Activated T-helper 1 cell treated with anti-CD3 and anti-CD28 coated beads, Interleukin-12 subunit alpha, Interleukin-12 subunit beta, Interleukin-2, Interleukin-4 antibody, amounts not matched to agents 30 ng/mL and 10 ng/mL and 1 ng/mL, durations not matched to agents 14 hours and 24 hours and 36 hours (primary cell): ENCODE measurements at regions of chr1 and their contacts with region 1.

Region 1: GRCh38 chr1:8913111-8913856 is 32.4 kb upstream of the CA6 start:
- DNase-seq: no peak
- H3K4me3 Mint-ChIP-seq: no peak overlapping the region
- H3K27ac Mint-ChIP-seq: no peak overlapping the region
- H3K4me1 Mint-ChIP-seq: peaks cover 25% of the 10 kb centered on the region
- H3K27me3 Mint-ChIP-seq: no peaks in the 10 kb centered on the region

Region 2: DNA sequence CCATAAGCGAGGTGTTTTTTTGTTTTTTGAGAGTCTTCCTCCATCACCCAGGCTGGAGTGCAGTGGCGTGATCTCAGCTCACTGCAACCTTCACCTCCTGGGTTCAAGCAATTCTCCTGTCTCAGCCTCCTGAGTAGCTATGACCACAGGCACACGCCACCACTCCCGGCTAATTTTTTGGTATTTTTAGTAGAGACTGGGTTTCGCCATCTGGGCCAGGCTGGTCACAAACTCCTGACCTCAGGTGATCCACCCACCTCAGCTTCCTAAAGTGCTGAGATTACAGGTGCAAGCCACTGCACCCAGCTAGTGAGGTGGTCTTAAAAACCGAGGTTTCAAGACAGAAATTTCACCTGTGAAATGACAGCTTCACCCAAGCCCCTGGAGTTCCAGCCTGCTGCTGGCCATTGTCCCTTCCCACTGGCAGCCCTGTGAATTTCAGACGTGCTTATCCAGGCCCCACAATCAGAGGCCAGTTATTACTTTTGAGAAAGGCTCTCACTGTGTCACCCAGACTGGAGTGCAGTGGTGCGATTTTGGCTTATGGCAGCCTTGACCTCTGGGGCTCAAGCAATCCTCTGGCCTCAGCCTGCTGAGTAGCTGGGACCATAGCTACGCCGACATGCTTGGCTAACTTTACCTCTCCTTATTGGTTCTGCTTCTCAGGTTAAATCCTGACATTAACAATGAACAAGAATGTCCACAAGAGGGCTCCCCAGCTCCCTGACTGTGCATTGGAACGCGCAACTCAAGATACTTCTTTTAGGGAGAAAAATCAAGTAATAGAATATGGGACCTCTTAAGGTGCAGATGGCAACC is 54.2 kb before region 1 on chr1:
- intact Hi-C with region 1: no loop called
- DNase-seq: peak; percentile 40
- H3K4me3 Mint-ChIP-seq: peak overlapping the region; percentile 46
- H3K27ac Mint-ChIP-seq: peak overlapping the region; percentile 82
- H3K4me1 Mint-ChIP-seq: peaks cover 42% of the 10 kb centered on the region
- H3K27me3 Mint-ChIP-seq: no peaks in the 10 kb centered on the region

Region 3: GRCh38 chr1:8947127-8947691 is 33.9 kb after region 1 on chr1:
- intact Hi-C with region 1: loop called (anchors 2 kb)
- DNase-seq: no peak
- H3K4me3 Mint-ChIP-seq: peak overlapping the region; percentile 68
- H3K27ac Mint-ChIP-seq: peak overlapping the region; percentile 98
- H3K4me1 Mint-ChIP-seq: peaks cover 73% of the 10 kb centered on the region
- H3K27me3 Mint-ChIP-seq: no peaks in the 10 kb centered on the region

Region 4: DNA sequence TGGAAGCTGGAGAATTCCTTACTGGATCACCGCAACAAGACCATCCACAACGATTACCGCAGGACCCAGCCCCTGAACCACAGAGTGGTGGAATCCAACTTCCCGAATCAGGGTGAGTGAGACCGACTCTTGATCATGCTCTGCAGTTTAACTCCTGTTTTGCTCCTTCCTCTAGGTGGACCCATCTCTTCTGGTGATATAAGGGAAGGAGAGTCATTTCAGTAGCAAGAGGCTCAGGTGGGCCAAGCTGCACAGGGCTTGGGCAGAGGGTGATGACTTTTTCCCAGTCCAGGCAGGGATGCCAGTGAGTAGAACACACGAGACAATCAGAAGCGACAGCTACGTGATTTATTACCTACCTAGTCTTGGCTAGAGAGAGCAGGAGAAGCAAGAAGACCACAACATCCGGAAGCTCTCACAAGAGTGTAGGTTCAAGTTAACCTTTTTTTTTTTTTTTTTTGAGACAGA is 57.6 kb after region 1 on chr1:
- intact Hi-C with region 1: loop called (anchors 1 kb)
- DNase-seq: peak; percentile 53
- H3K4me3 Mint-ChIP-seq: peak overlapping the region; percentile 97
- H3K27ac Mint-ChIP-seq: peak overlapping the region; percentile 98
- H3K4me1 Mint-ChIP-seq: peaks cover 57% of the 10 kb centered on the region
- H3K27me3 Mint-ChIP-seq: no peaks in the 10 kb centered on the region

Region 5: GRCh38 chr1:8987881-8988617 is 74.8 kb after region 1 on chr1:
- intact Hi-C with region 1: loop called (anchors 1 kb)
- DNase-seq: peak; percentile 66
- H3K4me3 Mint-ChIP-seq: peak overlapping the region; percentile 53
- H3K27ac Mint-ChIP-seq: peak overlapping the region; percentile 92
- H3K4me1 Mint-ChIP-seq: peaks cover 68% of the 10 kb centered on the region
- H3K27me3 Mint-ChIP-seq: no peaks in the 10 kb centered on the region

Region 6: DNA sequence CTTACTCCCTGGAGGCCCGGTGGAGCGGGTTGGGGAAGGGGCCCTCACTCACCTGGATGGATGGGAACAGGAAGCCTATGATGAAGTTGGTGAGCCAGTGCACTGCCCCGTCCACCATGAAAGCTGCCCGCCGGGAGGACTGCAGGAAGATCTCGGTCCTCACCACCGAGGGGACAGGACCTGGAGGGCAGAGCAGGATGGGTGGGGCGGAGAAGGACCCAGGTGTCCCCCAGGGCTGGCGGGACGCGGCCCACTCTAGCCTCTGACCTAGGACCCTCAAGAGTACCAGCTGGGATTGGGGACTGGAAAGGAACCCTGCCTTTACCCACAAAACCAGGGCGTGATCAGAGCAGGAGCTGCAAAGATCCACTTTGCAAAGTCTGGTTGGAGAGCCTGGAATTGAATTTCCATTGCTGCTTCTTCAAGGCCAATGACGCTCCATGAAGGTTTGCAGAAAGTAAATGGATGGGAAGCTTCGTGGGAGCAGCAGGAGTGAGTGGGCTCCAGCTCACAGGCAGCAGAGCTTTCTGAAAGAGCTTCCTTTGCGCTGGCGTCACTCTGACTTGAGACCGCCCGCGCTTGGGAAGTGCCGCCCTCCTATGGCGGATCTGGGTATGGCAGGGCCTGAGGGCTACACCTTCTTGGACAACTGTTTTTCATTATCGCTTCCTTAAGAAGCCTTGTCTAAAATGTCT is 91.6 kb after region 1 on chr1:
- intact Hi-C with region 1: loop called (anchors 1 kb)
- DNase-seq: peak; percentile 78
- H3K4me3 Mint-ChIP-seq: no peak overlapping the region
- H3K27ac Mint-ChIP-seq: no peak overlapping the region
- H3K4me1 Mint-ChIP-seq: peaks cover 6% of the 10 kb centered on the region
- H3K27me3 Mint-ChIP-seq: peaks cover 5% of the 10 kb centered on the region

Region 7: DNA sequence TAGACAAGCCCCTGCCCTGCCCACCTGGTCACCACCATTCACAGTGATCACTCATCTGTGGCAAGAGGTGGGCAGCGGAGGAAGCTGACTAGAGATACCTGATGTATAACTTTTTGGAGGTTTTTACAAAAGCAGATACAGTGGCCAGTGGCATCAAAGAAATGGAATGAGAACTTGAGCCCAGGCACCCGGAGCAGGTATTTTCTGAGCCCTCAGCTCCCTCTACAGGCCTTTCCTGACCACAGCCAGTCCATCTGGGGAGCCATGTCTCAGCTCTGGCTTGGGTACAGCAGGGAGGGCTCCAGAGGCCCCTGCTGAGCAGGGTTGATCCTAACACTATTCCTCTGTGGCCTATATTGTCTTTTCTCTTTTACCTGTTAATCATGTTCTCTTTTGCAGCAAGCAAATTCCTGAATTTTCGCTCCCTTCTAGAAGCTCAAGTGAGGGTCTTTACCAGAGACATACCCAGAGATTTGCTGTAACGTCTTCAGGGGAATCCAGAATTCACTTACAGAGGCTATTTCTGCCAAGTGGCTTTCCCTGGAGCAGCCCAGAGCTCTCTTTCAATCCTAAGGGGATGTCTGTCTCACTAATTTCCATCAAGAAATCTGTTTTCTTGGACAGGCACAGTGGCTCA is 188.3 kb after region 1 on chr1:
- intact Hi-C with region 1: loop called (anchors 1 kb)
- DNase-seq: peak; percentile 18
- H3K4me3 Mint-ChIP-seq: no peak overlapping the region
- H3K27ac Mint-ChIP-seq: no peak overlapping the region
- H3K4me1 Mint-ChIP-seq: no peaks in the 10 kb centered on the region
- H3K27me3 Mint-ChIP-seq: peaks cover 4% of the 10 kb centered on the region

Region 8: DNA sequence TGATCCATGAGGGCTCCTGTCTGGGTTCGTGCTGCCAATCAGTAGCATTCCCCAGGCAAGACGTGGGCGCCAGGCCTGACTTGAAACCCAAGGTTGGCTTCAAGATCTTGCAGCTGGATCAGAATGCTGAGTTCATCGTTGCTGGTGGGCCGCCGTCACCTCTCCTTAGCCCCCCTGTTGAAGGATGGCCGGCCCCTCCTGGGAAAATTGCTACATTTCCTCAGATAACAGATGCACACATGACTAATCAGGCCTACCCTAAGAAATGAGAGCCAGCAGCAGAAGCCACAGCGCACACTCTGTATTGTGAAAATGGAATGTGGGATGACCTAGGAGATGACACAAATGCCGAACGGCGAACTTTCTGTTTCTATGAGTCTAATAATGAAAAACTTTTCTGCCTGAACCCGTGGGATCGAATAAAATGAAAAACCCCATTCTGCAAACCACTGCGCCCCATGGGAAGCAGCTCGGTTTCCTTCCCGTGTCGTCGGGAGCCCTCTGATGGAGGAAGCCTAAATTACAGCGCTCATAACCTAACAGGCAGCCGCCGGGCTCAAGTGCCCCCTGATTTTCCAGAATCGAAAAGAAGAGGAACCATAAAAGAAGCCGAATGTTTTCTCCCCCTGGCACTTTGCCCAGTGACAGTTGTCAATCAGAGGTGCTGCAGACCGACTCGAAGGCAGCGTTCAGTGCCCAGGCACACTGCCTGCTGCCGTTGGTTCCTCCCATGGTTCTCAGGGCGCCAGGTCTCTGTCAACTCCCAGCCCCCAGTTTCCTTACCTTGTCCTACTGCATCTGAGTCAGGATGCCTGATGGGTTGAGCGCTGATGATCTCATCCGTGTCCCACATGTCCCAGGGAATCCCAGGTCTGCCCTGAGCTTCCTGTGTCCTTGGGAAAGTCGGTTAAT is 283.1 kb after region 1 on chr1:
- intact Hi-C with region 1: loop called (anchors 1 kb)
- DNase-seq: peak; percentile 47
- H3K4me3 Mint-ChIP-seq: no peak overlapping the region
- H3K27ac Mint-ChIP-seq: no peak overlapping the region
- H3K4me1 Mint-ChIP-seq: peaks cover 24% of the 10 kb centered on the region
- H3K27me3 Mint-ChIP-seq: peaks cover 54% of the 10 kb centered on the region